Transverse colon (tissue), 4 donors: ENCODE measurements at regions of chr16 and their contacts with region 1.

Region 1: GRCh38 chr16:84186685-84187437 is at the start of gene TAF1C:
- DNase-seq: peak; percentile 95
- H3K4me3 ChIP-seq: peak within 1 kb of the TSS; percentile 65 to 97 (median 88)
- H3K27ac ChIP-seq: peak within 1 kb of the TSS; percentile 75 to 82 (median 80)
- H3K4me1 ChIP-seq: peaks cover 5 to 12% (median 8%) of the 10 kb centered on the region in 4 donors
- H3K27me3 ChIP-seq: no peaks in the 10 kb centered on the region
- CTCF ChIP-seq: peak; percentile 93 to 97 (median 97)
- EP300 ChIP-seq: no peak
- POLR2A ChIP-seq: peak; percentile 43
- total RNA-seq, gene TAF1C: 33.3 to 297 (median 54.1) TPM

Region 2: DNA sequence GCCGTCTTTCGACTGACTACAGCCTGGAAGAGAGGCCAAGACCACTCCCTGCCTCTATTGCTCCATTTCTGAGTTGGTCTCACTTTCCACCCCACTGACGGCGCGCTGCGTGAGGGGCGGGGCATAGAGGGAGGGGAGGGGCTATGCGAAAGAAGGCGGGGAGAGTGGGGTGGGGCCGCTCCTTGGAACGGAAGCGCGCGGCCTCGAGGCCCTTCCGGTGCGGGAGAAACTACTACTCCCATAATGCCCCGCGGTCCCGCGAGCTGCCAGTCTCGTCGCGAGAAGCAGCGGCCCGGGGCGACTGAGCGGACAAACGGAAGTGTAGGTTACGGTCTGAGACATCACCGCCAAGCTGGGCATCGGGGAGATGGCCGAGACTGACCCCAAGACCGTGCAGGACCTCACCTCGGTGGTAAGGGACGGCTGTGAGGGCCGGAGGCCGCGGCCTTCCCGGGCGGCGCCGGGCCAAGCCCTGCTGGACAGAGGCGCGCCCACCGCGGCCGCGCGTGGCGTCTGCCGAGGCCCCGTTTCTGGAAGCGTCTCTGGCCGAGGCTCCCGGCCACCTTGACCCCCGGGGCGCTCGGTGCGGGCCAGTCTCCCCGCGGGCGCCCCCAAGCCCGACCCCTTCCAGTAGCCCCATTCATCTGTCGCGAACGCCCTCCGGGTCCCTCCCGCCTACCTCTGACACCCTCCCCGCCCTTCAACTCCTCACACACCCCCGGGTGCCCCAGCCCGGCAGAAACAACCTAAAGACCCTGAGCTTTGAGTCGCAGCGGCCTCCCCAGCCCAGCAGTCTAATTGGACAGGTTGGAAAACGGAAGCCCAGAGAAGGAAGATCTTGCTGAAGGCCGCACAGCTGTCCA is 378.9 kb before region 1 on chr16 and contains the start of gene HSBP1:
- in situ Hi-C with region 1: loop called in 1 of 4 experiments (anchors 25 kb)
- intact Hi-C with region 1: no loop called
- DNase-seq: peak; percentile 97
- H3K4me3 ChIP-seq: peak within 1 kb of the TSS; percentile 78 to 100 (median 94)
- H3K27ac ChIP-seq: peak within 1 kb of the TSS; percentile 87 to 95 (median 90)
- H3K4me1 ChIP-seq: peaks cover 7 to 35% (median 10%) of the 10 kb centered on the region in 4 donors
- H3K27me3 ChIP-seq: no peaks in the 10 kb centered on the region
- CTCF ChIP-seq: no peak
- EP300 ChIP-seq: no peak
- POLR2A ChIP-seq: peak; percentile 65
- total RNA-seq, gene HSBP1: 3.4 to 14.0 (median 10.8) TPM

Region 3: DNA sequence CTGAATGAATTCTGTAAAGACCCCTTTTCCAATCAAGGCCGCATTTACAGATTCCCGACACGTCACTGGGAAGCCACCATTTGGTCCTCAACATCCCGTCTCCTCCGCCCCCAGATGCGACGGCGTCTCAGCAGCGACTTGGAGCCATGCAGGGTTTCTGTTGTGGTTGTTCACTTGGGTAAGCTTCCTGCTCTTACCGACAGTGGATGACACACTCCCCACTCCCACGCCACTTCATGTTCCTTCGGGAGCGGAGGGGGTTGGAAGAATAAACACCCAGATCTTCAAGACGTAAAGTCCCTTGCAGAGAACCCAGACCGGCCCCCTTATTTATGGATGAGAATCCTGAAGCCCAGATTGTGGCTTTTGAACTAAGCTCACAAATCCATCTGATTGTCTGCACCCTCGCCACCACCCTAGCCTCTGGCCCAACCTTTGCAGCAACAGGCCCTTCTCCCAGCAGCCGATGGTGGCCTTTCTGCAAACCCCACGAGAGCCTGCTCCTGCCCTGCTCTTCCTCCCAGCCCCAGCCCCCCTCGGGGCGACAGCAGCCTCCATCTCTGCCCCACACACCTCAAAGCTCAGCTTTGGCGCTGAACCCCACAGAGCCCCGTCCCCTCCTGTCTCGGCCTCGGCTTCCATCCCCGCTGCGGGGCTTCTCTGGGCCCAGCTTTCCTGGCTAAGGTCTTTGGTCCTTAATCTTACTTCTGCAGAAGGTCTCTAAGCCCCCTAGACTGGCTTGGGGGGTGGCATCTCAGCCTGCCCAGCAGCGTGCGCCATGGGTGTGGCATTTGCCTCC is 252.8 kb before region 1 on chr16:
- in situ Hi-C with region 1: no loop called
- intact Hi-C with region 1: no loop called
- DNase-seq: no peak
- H3K4me3 ChIP-seq: no peak overlapping the region
- H3K27ac ChIP-seq: no peak overlapping the region
- H3K4me1 ChIP-seq: no peaks in the 10 kb centered on the region
- H3K27me3 ChIP-seq: no peaks in the 10 kb centered on the region
- CTCF ChIP-seq: no peak
- EP300 ChIP-seq: no peak
- POLR2A ChIP-seq: no peak

Region 4: GRCh38 chr16:83952940-83953795 is 233.7 kb before region 1 on chr16 and contains the start of gene OSGIN1:
- in situ Hi-C with region 1: loop called in 1 of 4 experiments (anchors 25 kb)
- intact Hi-C with region 1: no loop called
- DNase-seq: peak; percentile 96
- H3K4me3 ChIP-seq: peak within 1 kb of the TSS; percentile 48 to 73 (median 54)
- H3K27ac ChIP-seq: peak within 1 kb of the TSS; percentile 91 to 96 (median 94)
- H3K4me1 ChIP-seq: peaks cover 11 to 30% (median 22%) of the 10 kb centered on the region in 4 donors
- H3K27me3 ChIP-seq: no peaks in the 10 kb centered on the region
- CTCF ChIP-seq: no peak
- EP300 ChIP-seq: no peak
- POLR2A ChIP-seq: peak; percentile 98
- total RNA-seq, gene OSGIN1: 10.7 to 26.2 (median 16.7) TPM

Region 5: DNA sequence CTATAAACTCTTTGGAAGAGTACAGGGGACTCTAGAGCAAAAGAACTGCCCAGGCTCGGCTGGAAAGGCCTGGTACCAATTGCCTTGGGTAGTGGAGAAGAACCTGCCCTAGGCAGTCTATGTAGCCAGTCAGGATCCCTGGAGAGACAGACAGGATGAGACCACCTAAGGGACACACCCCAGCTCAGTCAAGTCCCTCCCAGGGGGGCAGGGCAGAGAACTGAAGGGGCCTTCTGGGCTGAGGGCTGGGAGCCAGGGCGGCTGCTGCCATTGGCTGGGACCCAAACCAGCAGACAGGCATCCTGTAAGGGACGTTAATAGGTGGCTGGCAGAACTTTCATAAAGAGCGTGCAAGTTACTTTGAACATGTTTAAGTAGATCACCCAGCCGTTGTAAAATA is 131.5 kb before region 1 on chr16:
- in situ Hi-C with region 1: no loop called
- intact Hi-C with region 1: no loop called
- DNase-seq: no peak
- H3K4me3 ChIP-seq: no peak overlapping the region
- H3K27ac ChIP-seq: peak overlapping the region in 1 of 4 donors; percentile 14
- H3K4me1 ChIP-seq: no peaks in the 10 kb centered on the region
- H3K27me3 ChIP-seq: no peaks in the 10 kb centered on the region
- CTCF ChIP-seq: no peak
- EP300 ChIP-seq: no peak
- POLR2A ChIP-seq: no peak

Region 6: DNA sequence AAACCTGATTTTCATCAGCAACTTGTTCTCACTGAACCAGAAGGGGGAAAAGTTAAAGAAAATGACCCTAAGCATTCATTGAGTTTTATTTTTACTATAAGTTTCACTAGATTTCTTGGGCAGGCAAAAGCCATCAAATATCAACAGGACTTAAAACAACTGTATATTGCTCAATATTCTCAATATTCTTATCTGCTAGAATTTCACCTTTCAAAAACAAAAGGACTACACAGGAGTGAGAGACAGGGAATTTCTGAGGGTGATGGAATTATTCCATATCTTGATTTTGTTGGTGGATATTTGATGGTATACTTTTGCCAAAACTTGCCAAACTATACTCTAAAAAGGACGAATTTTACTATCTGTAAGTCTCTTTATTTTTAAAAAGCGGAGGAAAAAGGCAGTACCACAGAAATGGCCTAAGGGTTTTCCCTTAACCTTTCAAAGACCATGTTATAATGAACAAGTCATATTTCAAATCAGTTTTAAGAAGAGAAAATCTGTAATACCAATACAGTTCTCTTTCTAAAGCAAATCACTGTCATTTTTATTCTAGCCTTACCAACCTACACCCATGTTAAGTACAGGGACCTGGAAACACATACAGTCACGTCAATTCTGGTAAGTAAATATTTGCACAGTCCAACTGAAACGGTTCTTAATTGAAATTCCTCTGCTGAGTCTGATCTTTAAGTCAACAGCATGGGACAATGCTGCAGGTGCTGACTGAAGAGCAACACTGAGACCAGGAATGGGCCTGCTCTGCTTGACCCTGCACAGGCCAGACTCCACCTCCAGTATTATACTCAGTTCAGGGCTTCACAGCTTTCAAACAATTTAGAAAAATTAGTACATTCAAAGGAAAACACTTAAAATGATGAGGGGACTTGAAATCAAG is 90.5 kb before region 1 on chr16:
- in situ Hi-C with region 1: loop called in 1 of 4 experiments (anchors 10 kb)
- intact Hi-C with region 1: no loop called
- DNase-seq: peak; percentile 49
- H3K4me3 ChIP-seq: no peak overlapping the region
- H3K27ac ChIP-seq: peak overlapping the region; percentile 51 to 72 (median 62)
- H3K4me1 ChIP-seq: peaks cover 0 to 42% (median 21%) of the 10 kb centered on the region in 4 donors
- H3K27me3 ChIP-seq: no peaks in the 10 kb centered on the region
- CTCF ChIP-seq: no peak
- EP300 ChIP-seq: no peak
- POLR2A ChIP-seq: no peak

Region 7: GRCh38 chr16:84391151-84392030 is 204.5 kb after region 1 on chr16:
- in situ Hi-C with region 1: no loop called
- intact Hi-C with region 1: no loop called
- DNase-seq: no peak
- H3K4me3 ChIP-seq: peak overlapping the region in 1 of 4 donors; percentile 13
- H3K27ac ChIP-seq: no peak overlapping the region
- H3K4me1 ChIP-seq: peaks cover 0 to 4% (median 0%) of the 10 kb centered on the region in 4 donors
- H3K27me3 ChIP-seq: no peaks in the 10 kb centered on the region
- CTCF ChIP-seq: no peak
- EP300 ChIP-seq: no peak
- POLR2A ChIP-seq: no peak